ENCODE measurements at regions of chr2 and their contacts with region 1.

Region 1: GRCh38 chr2:27275211-27276150 is at the start of gene DNAJC5G:
- DNase-seq: no peak
- ATAC-seq: no peak
- H3K4me3 ChIP-seq: no peak within 1 kb of the TSS
- H3K27ac ChIP-seq: no peak within 1 kb of the TSS
- H3K4me1 ChIP-seq: no peaks in the 10 kb centered on the region
- H3K27me3 ChIP-seq: peaks cover 0 to 3% (median 0%) of the 10 kb centered on the region in 4 donors
- CTCF ChIP-seq: no peak
- total RNA-seq, gene DNAJC5G: 0.06 TPM in 1 of 6 donors, not detected in the others

Region 2: GRCh38 chr2:27102329-27102728 is 173.2 kb before region 1 on chr2:
- intact Hi-C with region 1: loop called in 2 of 3 experiments (anchors 2 to 5 kb)
- DNase-seq: no peak
- ATAC-seq: no peak
- H3K4me3 ChIP-seq: no peak overlapping the region
- H3K27ac ChIP-seq: no peak overlapping the region
- H3K4me1 ChIP-seq: no peaks in the 10 kb centered on the region
- H3K27me3 ChIP-seq: no peaks in the 10 kb centered on the region
- CTCF ChIP-seq: no peak

Region 3: GRCh38 chr2:28004086-28004485 is 728.6 kb after region 1 on chr2:
- intact Hi-C with region 1: no loop called
- DNase-seq: no peak
- ATAC-seq: no peak
- H3K4me3 ChIP-seq: no peak overlapping the region
- H3K27ac ChIP-seq: no peak overlapping the region
- H3K4me1 ChIP-seq: peaks cover 0 to 3% (median 0%) of the 10 kb centered on the region in 3 donors
- H3K27me3 ChIP-seq: no peaks in the 10 kb centered on the region
- CTCF ChIP-seq: no peak

Measured in pancreas (tissue), 10 donors.